PC-9 (cell line): ENCODE measurements at regions of chr5 and their contacts with region 1.

Region 1: DNA sequence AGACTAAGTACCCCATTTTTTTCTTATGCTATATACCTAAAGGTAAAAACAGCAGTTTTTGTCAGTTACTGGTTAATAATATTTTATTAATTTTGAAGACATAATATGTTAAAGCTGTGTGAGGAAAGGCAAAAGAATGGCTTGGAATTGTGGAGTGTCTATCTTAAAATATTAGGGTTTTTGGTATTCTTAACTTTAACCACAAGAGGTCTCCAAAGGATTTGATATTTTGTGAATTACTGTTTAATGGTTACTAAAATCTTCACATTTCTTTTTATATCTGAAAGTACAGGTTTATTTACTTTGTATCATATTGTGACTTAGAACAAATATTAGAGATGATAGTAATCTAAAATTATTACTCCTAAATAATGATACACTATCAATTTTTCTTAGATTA is 32.0 kb upstream of the DHFR start:
- DNase-seq: peak in 1 of 2 experiments; percentile 35
- H3K4me3 ChIP-seq: no peak overlapping the region
- H3K27ac ChIP-seq: no peak overlapping the region
- H3K4me1 ChIP-seq: no peaks in the 10 kb centered on the region
- H3K27me3 ChIP-seq: no peaks in the 10 kb centered on the region
- CTCF ChIP-seq: peak; percentile 67

Region 2: GRCh38 chr5:81165493-81166119 is 478.8 kb after region 1 on chr5:
- CTCF ChIA-PET with region 1: no interaction called
- POLR2A ChIA-PET with region 1: no interaction called
- intact Hi-C with region 1: loop called (anchors 2 kb)
- DNase-seq: peak; percentile 57 to 66
- H3K4me3 ChIP-seq: no peak overlapping the region
- H3K27ac ChIP-seq: no peak overlapping the region
- H3K4me1 ChIP-seq: no peaks in the 10 kb centered on the region
- H3K27me3 ChIP-seq: no peaks in the 10 kb centered on the region
- CTCF ChIP-seq: peak; percentile 79

Region 3: DNA sequence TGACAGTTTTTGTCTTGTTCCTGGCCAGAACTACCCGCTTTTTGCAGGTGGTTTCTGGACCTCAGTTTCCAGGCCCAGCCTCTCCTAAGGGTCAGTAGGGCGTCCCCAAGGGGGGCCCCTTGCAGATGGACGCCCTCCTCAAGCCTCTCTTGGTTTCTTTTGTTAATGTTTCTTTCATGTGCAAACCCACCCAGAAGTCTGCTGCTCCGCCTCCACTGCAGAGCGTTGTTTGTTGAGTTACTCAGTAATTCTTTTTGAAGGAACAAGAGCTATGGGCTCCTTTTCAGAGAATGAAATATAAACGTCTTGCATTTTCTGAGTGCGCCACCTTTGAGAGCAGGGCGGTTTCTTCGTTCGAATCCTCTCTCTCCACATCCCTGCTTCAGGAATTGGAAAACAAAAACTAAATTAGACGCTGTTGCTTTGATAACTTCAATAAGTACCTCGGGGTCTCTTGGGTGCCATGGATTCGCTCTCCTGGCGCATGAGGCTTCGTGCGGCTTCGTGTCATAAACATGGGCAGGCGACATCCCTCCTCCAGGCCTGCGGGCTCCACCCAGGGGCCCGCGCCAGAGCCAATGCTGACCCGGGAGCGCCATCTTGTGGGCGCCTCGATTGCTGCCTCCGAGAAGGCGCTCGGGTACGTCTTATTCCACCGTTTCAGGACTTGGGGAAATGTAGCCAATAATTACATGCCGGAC is 508.0 kb after region 1 on chr5:
- CTCF ChIA-PET with region 1: no interaction called
- POLR2A ChIA-PET with region 1: no interaction called
- intact Hi-C with region 1: loop called (anchors 2 kb)
- DNase-seq: peak; percentile 62 to 81
- H3K4me3 ChIP-seq: no peak overlapping the region
- H3K27ac ChIP-seq: no peak overlapping the region
- H3K4me1 ChIP-seq: no peaks in the 10 kb centered on the region
- H3K27me3 ChIP-seq: no peaks in the 10 kb centered on the region
- CTCF ChIP-seq: peak; percentile 91